Activated T-helper 1 cell treated with anti-CD3 and anti-CD28 coated beads, Interleukin-12 subunit alpha, Interleukin-12 subunit beta, Interleukin-2, Interleukin-4 antibody, amounts not matched to agents 30 ng/mL and 10 ng/mL and 1 ng/mL, durations not matched to agents 14 hours and 24 hours and 36 hours (primary cell): ENCODE measurements at regions of chr15 and their contacts with region 1.

Region 1: GRCh38 chr15:55789066-55789660 is 46.2 kb upstream of the PRTG start:
- DNase-seq: peak; percentile 23
- H3K4me3 Mint-ChIP-seq: no peak overlapping the region
- H3K27ac Mint-ChIP-seq: no peak overlapping the region
- H3K4me1 Mint-ChIP-seq: no peaks in the 10 kb centered on the region
- H3K27me3 Mint-ChIP-seq: peaks cover 3% of the 10 kb centered on the region

Region 2: GRCh38 chr15:55917881-55918296 is 128.7 kb after region 1 on chr15:
- intact Hi-C with region 1: loop called (anchors 5 kb)
- DNase-seq: no peak
- H3K4me3 Mint-ChIP-seq: no peak overlapping the region
- H3K27ac Mint-ChIP-seq: no peak overlapping the region
- H3K4me1 Mint-ChIP-seq: peaks cover 6% of the 10 kb centered on the region
- H3K27me3 Mint-ChIP-seq: no peaks in the 10 kb centered on the region